Dorsolateral prefrontal cortex (tissue), 120 donors: ENCODE measurements at regions of chr12 and their contacts with region 1.

Region 1: GRCh38 chr12:121399391-121400331 is at the start of gene RNF34:
- DNase-seq: peak; percentile 95 to 99 (median 98)
- H3K4me3 ChIP-seq: peak within 1 kb of the TSS; percentile 71 to 100 (median 98)
- H3K27ac ChIP-seq: peak within 1 kb of the TSS in 58 of 59 donors; percentile 51 to 94 (median 86)
- H3K27me3 ChIP-seq: no peaks in the 10 kb centered on the region
- CTCF ChIP-seq: peak in 33 of 56 donors; percentile 4 to 60 (median 31)
- total RNA-seq, gene RNF34: 45.5 to 82.8 (median 62.9) TPM

Region 2: GRCh38 chr12:121296618-121297434 is 102.8 kb before region 1 on chr12 and contains the start of gene CAMKK2:
- intact Hi-C with region 1: loop called in 1 of 2 experiments (anchors 2 kb)
- DNase-seq: peak; percentile 57 to 91 (median 76)
- H3K4me3 ChIP-seq: peak within 1 kb of the TSS; percentile 71 to 100 (median 96)
- H3K27ac ChIP-seq: peak within 1 kb of the TSS in 58 of 59 donors; percentile 49 to 96 (median 89)
- H3K27me3 ChIP-seq: no peaks in the 10 kb centered on the region
- CTCF ChIP-seq: peak in 38 of 56 donors; percentile 9 to 46 (median 22)
- total RNA-seq, gene CAMKK2: 52.8 to 279 (median 164) TPM

Region 3: DNA sequence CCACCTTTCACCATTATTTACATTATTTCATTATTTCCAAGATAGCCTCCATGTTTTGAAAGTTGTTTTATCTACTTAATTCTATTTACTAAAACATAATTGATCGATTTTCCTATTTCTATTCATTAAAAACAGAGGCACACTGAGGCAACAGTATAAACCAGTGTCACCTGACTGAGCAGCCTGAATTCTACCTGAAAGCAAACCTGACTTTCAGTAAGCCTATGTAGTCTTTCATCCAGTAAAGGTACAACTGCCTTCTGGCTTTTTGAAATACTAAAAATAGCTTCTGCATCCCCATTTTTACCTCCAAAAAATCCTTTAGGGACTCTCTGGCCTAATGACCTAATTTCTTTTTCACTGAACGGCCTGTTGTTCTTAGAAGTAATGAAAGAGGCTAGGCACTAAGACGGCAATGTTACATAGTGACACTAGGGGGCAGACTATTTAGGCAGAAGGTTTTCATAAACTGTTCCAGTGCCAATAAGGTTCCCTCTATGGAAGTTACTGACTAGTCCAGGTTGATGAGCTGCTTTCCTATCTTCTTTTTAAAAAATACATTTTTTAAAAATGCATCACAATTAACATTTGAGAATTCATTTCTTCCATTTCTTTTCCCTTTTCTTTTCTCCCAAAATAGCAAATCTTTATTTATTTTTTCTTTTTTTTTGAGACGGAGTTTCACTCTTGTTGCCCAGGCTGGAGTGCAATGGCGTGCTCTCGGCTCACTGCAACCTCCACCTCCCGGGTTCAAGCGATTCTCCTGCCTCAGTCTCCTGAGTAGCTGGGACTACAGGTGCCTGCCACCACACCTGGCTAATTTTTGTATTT is 64.9 kb before region 1 on chr12:
- intact Hi-C with region 1: no loop called
- DNase-seq: peak in 1 of 10 donors; percentile 17
- H3K4me3 ChIP-seq: peak overlapping the region in 1 of 59 donors; percentile 9
- H3K27ac ChIP-seq: peak overlapping the region in 33 of 59 donors; percentile 4 to 77 (median 47)
- H3K27me3 ChIP-seq: no peaks in the 10 kb centered on the region
- CTCF ChIP-seq: peak; percentile 73 to 97 (median 88)

Region 4: GRCh38 chr12:121351820-121352681 is 47.6 kb before region 1 on chr12 and contains the start of gene ANAPC5:
- intact Hi-C with region 1: loop called (anchors 1 to 5 kb)
- DNase-seq: peak; percentile 86 to 99 (median 96)
- H3K4me3 ChIP-seq: peak within 1 kb of the TSS; percentile 53 to 99 (median 94)
- H3K27ac ChIP-seq: peak within 1 kb of the TSS in 58 of 59 donors; percentile 3 to 94 (median 84)
- H3K27me3 ChIP-seq: no peaks in the 10 kb centered on the region
- CTCF ChIP-seq: peak in 43 of 56 donors; percentile 19 to 63 (median 33)
- total RNA-seq, gene ANAPC5: 108 to 272 (median 159) TPM

Region 5: GRCh38 chr12:121443193-121443870 is 43.7 kb after region 1 on chr12:
- intact Hi-C with region 1: loop called (anchors 1 to 5 kb)
- DNase-seq: peak; percentile 75 to 92 (median 88)
- H3K4me3 ChIP-seq: peak overlapping the region in 4 of 59 donors; percentile 3 to 31 (median 6)
- H3K27ac ChIP-seq: peak overlapping the region in 52 of 59 donors; percentile 3 to 91 (median 80)
- H3K27me3 ChIP-seq: no peaks in the 10 kb centered on the region
- CTCF ChIP-seq: peak; percentile 67 to 95 (median 87)